Activated CD4-positive, alpha-beta memory T cell treated with anti-CD3 and anti-CD28 coated beads for 36 hours (primary cell): ENCODE measurements at regions of chr12 and their contacts with region 1.

Region 1: GRCh38 chr12:14384783-14385638 is 19.5 kb downstream of the ATF7IP start:
- DNase-seq: peak; percentile 77
- H3K4me3 Mint-ChIP-seq: peak overlapping the region; percentile 81
- H3K27ac Mint-ChIP-seq: peak overlapping the region; percentile 96
- H3K4me1 Mint-ChIP-seq: peaks cover 60% of the 10 kb centered on the region
- H3K27me3 Mint-ChIP-seq: no peaks in the 10 kb centered on the region

Region 2: DNA sequence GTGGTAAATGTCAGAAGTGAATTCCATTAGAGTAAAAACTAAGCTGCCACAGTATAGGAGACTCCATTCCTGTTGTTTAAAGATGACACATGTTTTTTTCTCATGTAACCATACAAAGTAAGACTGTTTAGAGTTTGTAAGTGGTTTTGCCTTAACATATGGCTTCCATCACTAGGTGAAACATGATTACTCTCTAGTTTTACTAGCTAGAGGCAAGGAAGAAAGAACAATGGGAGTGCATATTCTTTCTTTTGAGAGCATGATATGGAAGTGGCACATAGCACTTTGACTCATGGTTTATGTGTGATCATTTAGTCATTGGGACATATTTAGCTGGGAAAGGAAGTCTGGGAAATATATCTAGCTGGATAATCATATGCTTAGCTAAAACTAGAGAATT is 11.8 kb before region 1 on chr12:
- CTCF ChIA-PET with region 1: interaction called, 26 read pairs
- POLR2A ChIA-PET with region 1: interaction called, 9 read pairs
- intact Hi-C with region 1: loop called (anchors 1 kb)
- DNase-seq: no peak
- H3K4me3 Mint-ChIP-seq: peak overlapping the region; percentile 24
- H3K27ac Mint-ChIP-seq: peak overlapping the region; percentile 96
- H3K4me1 Mint-ChIP-seq: peaks cover 59% of the 10 kb centered on the region
- H3K27me3 Mint-ChIP-seq: no peaks in the 10 kb centered on the region

Region 3: GRCh38 chr12:14403711-14404196 is 18.7 kb after region 1 on chr12:
- CTCF ChIA-PET with region 1: no interaction called
- POLR2A ChIA-PET with region 1: no interaction called
- intact Hi-C with region 1: loop called (anchors 2 kb)
- DNase-seq: no peak
- H3K4me3 Mint-ChIP-seq: peak overlapping the region; percentile 55
- H3K27ac Mint-ChIP-seq: peak overlapping the region; percentile 77
- H3K4me1 Mint-ChIP-seq: peaks cover 77% of the 10 kb centered on the region
- H3K27me3 Mint-ChIP-seq: no peaks in the 10 kb centered on the region

Region 4: DNA sequence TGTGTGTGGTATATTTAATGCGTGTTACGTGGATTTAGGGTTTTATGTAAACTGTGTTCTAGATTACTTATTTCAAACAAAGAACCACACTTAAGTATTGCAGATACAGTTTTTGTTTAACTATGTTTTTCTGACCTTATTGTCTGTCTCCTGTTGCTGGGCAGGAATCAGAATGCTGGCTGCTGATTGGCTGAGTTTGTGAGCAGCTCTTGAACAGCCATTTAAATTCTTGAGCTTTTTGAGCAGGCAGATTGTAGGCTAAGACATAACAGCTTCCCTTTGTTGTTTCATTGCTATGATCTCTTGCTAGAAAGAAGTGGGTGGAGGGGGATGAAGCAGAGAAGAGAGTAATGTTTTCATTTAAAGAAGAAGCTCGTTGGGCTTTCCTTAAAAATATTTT is 32.7 kb after region 1 on chr12:
- CTCF ChIA-PET with region 1: interaction called, 10 read pairs
- POLR2A ChIA-PET with region 1: interaction called, 3 read pairs
- intact Hi-C with region 1: loop called (anchors 1 kb)
- DNase-seq: peak; percentile 85
- H3K4me3 Mint-ChIP-seq: peak overlapping the region; percentile 69
- H3K27ac Mint-ChIP-seq: peak overlapping the region; percentile 94
- H3K4me1 Mint-ChIP-seq: peaks cover 63% of the 10 kb centered on the region
- H3K27me3 Mint-ChIP-seq: no peaks in the 10 kb centered on the region

Region 5: DNA sequence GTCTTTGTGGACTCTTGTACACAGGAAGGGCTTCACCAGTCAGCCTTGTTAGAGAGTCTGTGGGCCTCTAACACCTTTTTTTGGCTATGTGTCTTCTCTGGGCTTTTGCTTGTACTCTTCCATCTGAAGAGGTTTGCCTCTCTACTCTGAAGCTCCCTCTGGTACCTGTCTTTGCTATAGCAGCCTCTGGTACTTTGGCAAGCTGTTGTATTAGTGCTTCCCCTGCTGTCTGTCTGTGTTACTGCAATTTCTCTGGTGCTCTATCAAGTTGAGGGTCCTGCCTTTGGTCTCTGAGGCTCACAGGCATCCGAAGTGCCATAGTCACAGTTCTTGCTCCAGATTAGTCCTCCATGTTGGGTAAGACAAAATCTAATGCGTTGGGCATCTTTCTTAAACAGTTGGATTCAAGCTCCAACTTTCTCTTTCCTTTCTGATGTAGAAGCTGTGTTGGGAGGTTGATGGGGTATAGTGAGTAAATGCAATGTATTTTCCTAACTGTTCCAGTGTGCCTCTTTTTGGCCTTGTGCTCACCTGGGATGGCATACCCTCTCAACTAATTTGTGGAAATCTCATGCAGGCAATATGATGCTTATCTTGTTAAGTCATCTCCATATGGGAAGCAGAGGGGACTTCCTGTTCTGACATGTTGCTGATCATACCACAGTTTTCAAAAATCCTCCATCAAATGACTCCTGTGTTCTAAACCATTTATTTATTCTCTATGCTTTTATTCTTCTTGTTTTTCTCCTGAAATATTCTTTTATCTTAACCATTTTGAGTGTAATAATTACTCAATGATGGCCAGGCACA is 69.3 kb after region 1 on chr12:
- CTCF ChIA-PET with region 1: interaction called, 10 read pairs
- POLR2A ChIA-PET with region 1: interaction called, 4 read pairs
- intact Hi-C with region 1: no loop called
- DNase-seq: peak; percentile 31
- H3K4me3 Mint-ChIP-seq: peak overlapping the region; percentile 20
- H3K27ac Mint-ChIP-seq: peak overlapping the region; percentile 77
- H3K4me1 Mint-ChIP-seq: peaks cover 56% of the 10 kb centered on the region
- H3K27me3 Mint-ChIP-seq: no peaks in the 10 kb centered on the region

Region 6: GRCh38 chr12:15563663-15564062 is 1178.7 kb after region 1 on chr12:
- CTCF ChIA-PET with region 1: no interaction called
- POLR2A ChIA-PET with region 1: no interaction called
- intact Hi-C with region 1: loop called (anchors 10 kb)
- DNase-seq: peak; percentile 40
- H3K4me3 Mint-ChIP-seq: peak overlapping the region; percentile 69
- H3K27ac Mint-ChIP-seq: peak overlapping the region; percentile 90
- H3K4me1 Mint-ChIP-seq: peaks cover 58% of the 10 kb centered on the region
- H3K27me3 Mint-ChIP-seq: no peaks in the 10 kb centered on the region